ENCODE measurements at regions of chr19 and their contacts with region 1.

Region 1: DNA sequence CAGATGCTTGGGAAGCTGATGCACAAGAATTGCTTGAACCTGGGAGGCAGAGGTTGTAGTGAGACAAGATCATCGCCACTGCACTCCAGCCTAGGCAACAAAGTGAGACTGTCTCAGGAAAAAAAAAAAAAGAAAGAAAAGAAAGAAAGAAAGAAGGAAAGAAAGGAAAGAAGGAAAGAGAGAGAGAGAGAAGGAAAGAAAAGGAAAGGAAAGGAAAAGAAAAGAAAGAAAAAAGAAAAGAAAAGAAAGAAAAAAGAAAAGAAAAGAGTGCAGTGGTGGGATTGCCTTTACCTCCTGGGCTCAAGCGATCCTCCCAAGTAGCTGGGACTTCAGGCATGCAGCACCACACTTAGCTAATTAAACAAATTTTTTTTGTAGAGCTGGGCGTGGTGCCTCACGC is 12.9 kb downstream of the OLFM2 start:
- DNase-seq: no peak
- ATAC-seq: no peak
- H3K4me3 Mint-ChIP-seq: no peak overlapping the region
- H3K27ac Mint-ChIP-seq: no peak overlapping the region
- H3K4me1 Mint-ChIP-seq: no peaks in the 10 kb centered on the region
- H3K27me3 Mint-ChIP-seq: peaks cover 14% of the 10 kb centered on the region

Region 2: GRCh38 chr19:9934132-9934950 is 10.9 kb after region 1 on chr19:
- CTCF ChIA-PET with region 1: interaction called, 24 read pairs
- DNase-seq: peak; percentile 86
- ATAC-seq: peak; percentile 83
- H3K4me3 Mint-ChIP-seq: no peak overlapping the region
- H3K27ac Mint-ChIP-seq: no peak overlapping the region
- H3K4me1 Mint-ChIP-seq: peaks cover 14% of the 10 kb centered on the region
- H3K27me3 Mint-ChIP-seq: peaks cover 47% of the 10 kb centered on the region

Region 3: GRCh38 chr19:9953802-9954542 is 30.5 kb after region 1 on chr19:
- CTCF ChIA-PET with region 1: no interaction called
- DNase-seq: no peak
- ATAC-seq: no peak
- H3K4me3 Mint-ChIP-seq: no peak overlapping the region
- H3K27ac Mint-ChIP-seq: no peak overlapping the region
- H3K4me1 Mint-ChIP-seq: no peaks in the 10 kb centered on the region
- H3K27me3 Mint-ChIP-seq: peaks cover 4% of the 10 kb centered on the region

Measured in activated CD8-positive, alpha-beta memory T cell treated with anti-CD3 and anti-CD28 coated beads, Interleukin-2, amount 10 ng/mL, durations not matched to agents 7 days and 5 days (primary cell).